ENCODE measurements at regions of chr6 and their contacts with region 1.

Region 1: GRCh38 chr6:27893059-27893835 is 18.9 kb downstream of the OR2B2 start:
- DNase-seq: peak in 1 of 2 donors; percentile 88
- H3K4me3 ChIP-seq: peak overlapping the region; percentile 61 to 88
- H3K27ac ChIP-seq: peak overlapping the region; percentile 57 to 58
- H3K4me1 ChIP-seq: peaks cover 0 to 10% of the 10 kb centered on the region in 2 donors
- H3K27me3 ChIP-seq: no peaks in the 10 kb centered on the region
- CTCF ChIP-seq: no peak

Region 2: GRCh38 chr6:27177485-27178406 is 715.5 kb before region 1 on chr6:
- intact Hi-C with region 1: loop called (anchors 2 kb)
- DNase-seq: peak; percentile 46 to 92
- H3K4me3 ChIP-seq: peak overlapping the region; percentile 75 to 81
- H3K27ac ChIP-seq: peak overlapping the region; percentile 80 to 85
- H3K4me1 ChIP-seq: peaks cover 0 to 7% of the 10 kb centered on the region in 2 donors
- H3K27me3 ChIP-seq: no peaks in the 10 kb centered on the region
- CTCF ChIP-seq: peak in 2 of 3 experiments; percentile 53 to 66

Region 3: DNA sequence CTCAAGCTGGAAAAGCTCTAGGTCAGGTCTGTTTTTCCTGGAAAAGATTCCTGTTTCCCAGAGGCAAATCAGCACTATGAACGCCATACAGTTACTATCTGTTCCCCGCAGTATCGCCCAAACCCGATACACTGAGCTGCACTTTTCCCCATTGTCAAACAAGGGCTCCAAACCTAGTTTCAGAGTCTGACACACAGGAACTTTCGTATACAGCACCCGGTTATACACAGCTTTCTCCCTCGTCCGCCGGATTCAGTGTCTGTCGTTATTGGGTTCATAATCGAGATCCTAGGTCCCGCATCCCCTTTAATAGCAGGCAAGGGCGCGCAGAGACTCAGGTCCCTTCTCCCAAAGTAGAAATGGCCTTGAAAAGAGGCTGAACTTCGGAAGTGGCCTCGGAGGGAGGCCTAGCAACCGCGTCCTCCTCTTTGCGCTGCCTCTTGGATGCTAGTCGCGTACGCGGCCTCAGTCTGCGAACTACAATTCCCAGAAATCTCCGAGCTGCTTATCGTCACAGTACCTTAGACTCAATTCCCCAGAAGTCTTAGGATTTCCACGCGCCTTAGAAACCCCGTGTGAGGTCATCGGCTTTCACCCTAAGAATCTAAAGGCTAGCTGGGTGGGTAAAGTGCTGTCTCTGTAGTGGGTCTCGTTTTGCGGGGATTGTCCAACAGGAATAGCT is 470.5 kb before region 1 on chr6:
- intact Hi-C with region 1: no loop called
- DNase-seq: no peak
- H3K4me3 ChIP-seq: no peak overlapping the region
- H3K27ac ChIP-seq: no peak overlapping the region
- H3K4me1 ChIP-seq: no peaks in the 10 kb centered on the region
- H3K27me3 ChIP-seq: no peaks in the 10 kb centered on the region
- CTCF ChIP-seq: no peak

Region 4: DNA sequence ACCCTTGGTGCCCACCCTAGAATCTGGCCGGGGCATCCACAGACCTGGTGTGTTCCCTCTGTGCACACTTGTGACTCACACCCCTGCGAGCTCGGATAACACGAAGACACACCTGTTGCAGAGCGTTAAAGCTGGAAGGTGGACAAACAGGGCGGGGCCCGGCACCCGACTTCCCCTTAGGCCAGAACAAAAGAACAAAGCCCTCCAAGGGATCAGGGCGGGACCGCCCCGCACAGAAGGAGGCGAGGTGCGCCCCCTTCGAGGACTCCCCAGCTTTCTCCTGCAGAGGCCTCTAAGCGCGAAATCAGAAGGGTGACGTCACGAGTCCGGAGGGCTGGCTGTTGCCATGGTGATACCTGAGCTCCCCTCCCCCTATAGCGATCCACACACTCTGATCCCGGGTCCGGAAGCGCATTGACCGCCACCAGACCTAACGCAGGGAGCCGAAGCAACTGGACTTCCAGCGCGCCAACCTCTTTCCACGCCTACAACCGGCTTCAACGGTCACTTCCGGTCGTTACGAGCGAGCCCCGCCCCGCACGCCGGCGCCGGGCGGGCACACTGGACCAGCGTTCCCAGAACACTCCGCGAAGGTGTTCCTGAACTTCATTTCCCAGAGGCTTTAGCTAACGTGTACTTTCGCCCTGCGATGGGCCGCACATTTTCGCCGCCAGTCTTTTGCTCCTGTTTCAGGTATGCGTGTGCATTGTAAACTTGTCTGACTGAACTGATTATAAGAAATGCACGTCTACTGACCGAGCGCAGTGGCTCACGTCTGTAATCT is 420.4 kb before region 1 on chr6 and contains the start of gene ZNF184:
- intact Hi-C with region 1: loop called (anchors 2 kb)
- DNase-seq: peak; percentile 75 to 97
- H3K4me3 ChIP-seq: peak within 1 kb of the TSS; percentile 65 to 89
- H3K27ac ChIP-seq: peak within 1 kb of the TSS; percentile 84 to 86
- H3K4me1 ChIP-seq: peaks cover 0 to 8% of the 10 kb centered on the region in 2 donors
- H3K27me3 ChIP-seq: no peaks in the 10 kb centered on the region
- CTCF ChIP-seq: peak in 2 of 3 experiments; percentile 7 to 12
- total RNA-seq, gene ZNF184: 2.1 TPM

Region 5: GRCh38 chr6:27518881-27519795 is 374.1 kb before region 1 on chr6:
- intact Hi-C with region 1: loop called (anchors 5 kb)
- DNase-seq: peak in 1 of 2 donors; percentile 77
- H3K4me3 ChIP-seq: peak overlapping the region; percentile 76 to 86
- H3K27ac ChIP-seq: peak overlapping the region; percentile 90 to 94
- H3K4me1 ChIP-seq: peaks cover 0 to 8% of the 10 kb centered on the region in 2 donors
- H3K27me3 ChIP-seq: no peaks in the 10 kb centered on the region
- CTCF ChIP-seq: peak; percentile 31 to 78 (median 71)

Region 6: GRCh38 chr6:27772261-27773001 is 120.8 kb before region 1 on chr6:
- intact Hi-C with region 1: loop called (anchors 1 kb)
- DNase-seq: peak; percentile 51 to 92
- H3K4me3 ChIP-seq: no peak overlapping the region
- H3K27ac ChIP-seq: no peak overlapping the region
- H3K4me1 ChIP-seq: no peaks in the 10 kb centered on the region
- H3K27me3 ChIP-seq: no peaks in the 10 kb centered on the region
- CTCF ChIP-seq: peak; percentile 87 to 94 (median 88)

Region 7: GRCh38 chr6:27838058-27838944 is 54.9 kb before region 1 on chr6:
- intact Hi-C with region 1: loop called (anchors 2 kb)
- DNase-seq: peak; percentile 50 to 87
- H3K4me3 ChIP-seq: peak overlapping the region; percentile 71 to 80
- H3K27ac ChIP-seq: peak overlapping the region; percentile 95 to 96
- H3K4me1 ChIP-seq: peaks cover 0 to 8% of the 10 kb centered on the region in 2 donors
- H3K27me3 ChIP-seq: no peaks in the 10 kb centered on the region
- CTCF ChIP-seq: no peak

Region 8: DNA sequence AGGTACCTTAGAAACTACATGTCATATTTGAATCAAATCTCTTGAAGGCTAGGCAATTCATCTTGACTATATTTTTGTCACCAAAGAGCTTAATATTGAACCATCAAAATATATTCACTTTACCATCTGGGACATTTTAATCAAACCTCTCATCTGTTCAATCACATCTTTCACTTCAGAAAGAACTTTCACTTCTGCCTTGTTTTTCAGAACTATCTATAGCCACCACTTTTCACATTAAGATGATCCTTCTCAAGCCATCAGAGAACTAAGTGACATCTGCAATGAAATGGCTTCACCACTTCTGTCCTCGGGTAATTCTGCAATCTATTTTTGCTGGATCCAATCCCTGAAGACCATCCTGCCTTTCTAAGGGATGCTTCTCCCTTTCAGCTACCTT is 38.8 kb before region 1 on chr6:
- intact Hi-C with region 1: no loop called
- DNase-seq: no peak
- H3K4me3 ChIP-seq: no peak overlapping the region
- H3K27ac ChIP-seq: no peak overlapping the region
- H3K4me1 ChIP-seq: no peaks in the 10 kb centered on the region
- H3K27me3 ChIP-seq: no peaks in the 10 kb centered on the region
- CTCF ChIP-seq: no peak

Region 9: DNA sequence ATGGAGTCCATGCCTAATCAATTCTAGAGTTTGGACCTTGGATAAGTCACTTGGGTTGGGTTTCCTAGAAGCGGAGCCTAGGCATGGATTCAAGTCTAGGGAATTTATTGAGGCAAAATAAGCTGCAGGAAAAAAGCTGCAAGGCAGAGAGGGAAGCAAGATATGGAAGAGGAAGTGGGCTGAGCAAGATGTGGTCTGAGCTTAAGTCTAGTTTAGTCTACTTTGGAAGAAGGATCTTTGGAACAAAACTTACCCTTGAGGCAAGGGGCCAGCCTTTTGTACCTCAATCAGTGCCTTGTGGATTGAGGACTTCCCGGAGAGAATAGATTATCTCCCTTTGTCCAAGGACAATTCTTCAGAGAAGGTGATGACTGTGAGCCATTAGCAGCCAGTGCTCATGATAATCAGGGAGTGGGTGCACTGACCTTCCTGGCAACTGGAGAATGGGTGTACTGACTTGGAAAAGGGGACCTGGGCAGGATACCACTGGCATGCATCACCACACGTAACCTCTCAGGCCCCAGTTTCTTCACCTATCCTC is 342.7 kb after region 1 on chr6:
- intact Hi-C with region 1: no loop called
- DNase-seq: no peak
- H3K4me3 ChIP-seq: no peak overlapping the region
- H3K27ac ChIP-seq: no peak overlapping the region
- H3K4me1 ChIP-seq: no peaks in the 10 kb centered on the region
- H3K27me3 ChIP-seq: no peaks in the 10 kb centered on the region
- CTCF ChIP-seq: no peak

Region 10: GRCh38 chr6:28863604-28864320 is 970.5 kb after region 1 on chr6:
- intact Hi-C with region 1: loop called (anchors 10 kb)
- DNase-seq: peak in 1 of 2 donors; percentile 86
- H3K4me3 ChIP-seq: peak overlapping the region; percentile 66 to 81
- H3K27ac ChIP-seq: peak overlapping the region; percentile 59 to 78
- H3K4me1 ChIP-seq: peaks cover 0 to 3% of the 10 kb centered on the region in 2 donors
- H3K27me3 ChIP-seq: no peaks in the 10 kb centered on the region
- CTCF ChIP-seq: no peak